ENCODE measurements at regions of chr1 and their contacts with region 1.

Region 1: GRCh38 chr1:162218975-162219374 is 149.5 kb downstream of the NOS1AP start:
- DNase-seq: no peak
- H3K4me3 ChIP-seq: no peak overlapping the region
- H3K27ac ChIP-seq: peak overlapping the region in 1 of 2 donors; percentile 54
- H3K4me1 ChIP-seq: peaks cover 0 to 18% of the 10 kb centered on the region in 2 donors
- H3K27me3 ChIP-seq: no peaks in the 10 kb centered on the region
- CTCF ChIP-seq: no peak
- POLR2A ChIP-seq: no peak

Region 2: DNA sequence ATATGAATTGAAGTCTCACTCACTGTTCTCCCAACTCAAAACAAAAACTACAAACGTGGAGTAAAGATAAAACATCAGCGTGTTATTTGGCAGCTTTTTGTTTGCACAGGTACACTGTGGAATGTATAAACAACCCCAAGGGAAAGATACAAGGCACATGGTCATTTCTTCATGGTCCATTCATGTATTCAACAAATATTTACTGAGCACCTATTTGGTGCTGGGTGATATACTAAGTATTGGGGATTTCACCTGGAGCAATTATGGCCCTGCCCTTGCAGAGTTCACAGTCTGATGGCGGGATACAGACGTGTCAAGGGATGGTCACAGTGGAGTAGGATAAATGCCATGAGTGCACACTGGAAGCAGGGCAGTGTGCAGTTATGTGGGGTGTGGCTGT is 21.6 kb after region 1 on chr1:
- intact Hi-C with region 1: loop called (anchors 1 kb)
- DNase-seq: no peak
- H3K4me3 ChIP-seq: no peak overlapping the region
- H3K27ac ChIP-seq: peak overlapping the region; percentile 44 to 74
- H3K4me1 ChIP-seq: peaks cover 0 to 6% of the 10 kb centered on the region in 2 donors
- H3K27me3 ChIP-seq: no peaks in the 10 kb centered on the region
- CTCF ChIP-seq: no peak
- POLR2A ChIP-seq: no peak

Measured in breast epithelium (tissue), 4 donors.